ENCODE measurements at regions of chr11 and their contacts with region 1.

Region 1: DNA sequence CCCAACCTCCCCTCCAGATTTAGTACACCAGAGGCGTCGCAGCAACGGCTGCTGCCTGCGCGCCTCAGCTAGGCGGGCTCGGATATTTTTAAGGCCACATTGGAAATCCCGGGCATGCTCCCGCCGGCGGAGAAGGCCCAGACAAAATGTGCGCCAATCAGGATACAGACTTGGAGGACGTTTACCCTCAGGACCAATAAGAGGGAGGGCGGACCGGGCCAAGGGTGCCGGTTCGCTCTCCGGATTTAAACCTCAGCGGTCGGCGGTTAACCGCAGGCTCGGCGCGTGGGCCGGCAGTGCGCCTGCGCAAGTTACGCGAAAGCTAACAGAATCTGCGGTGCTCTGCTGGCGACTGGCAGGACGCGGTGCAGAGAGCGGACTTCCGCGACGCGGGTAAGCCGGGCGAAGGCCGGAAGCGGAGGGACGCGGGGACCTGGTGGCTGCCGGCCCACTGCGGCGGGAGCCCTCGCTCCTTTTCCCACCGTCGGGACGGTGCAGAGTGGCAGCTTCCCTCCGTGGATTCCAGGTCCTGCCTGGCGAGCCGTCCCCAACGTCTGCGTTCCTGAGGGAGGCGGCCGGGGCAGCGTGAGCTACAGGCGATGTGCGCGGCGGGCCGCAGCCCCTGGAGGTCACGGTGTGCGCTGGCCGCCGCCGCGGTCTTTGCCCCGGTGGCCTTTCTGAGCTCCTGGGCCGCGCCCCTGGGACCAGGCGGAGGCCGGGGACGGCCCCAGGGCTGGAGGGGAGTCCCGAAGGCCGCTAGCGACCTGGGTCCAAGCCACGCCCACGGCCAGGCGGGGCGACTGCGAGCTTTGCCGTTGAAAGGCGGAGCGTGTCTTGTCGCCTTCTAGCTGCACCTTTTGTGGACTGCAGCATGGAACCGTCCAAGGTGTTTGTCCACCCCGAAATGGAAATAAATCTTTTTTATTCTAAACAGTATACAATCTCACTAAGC is at the start of gene HYLS1:
- DNase-seq: peak; percentile 99
- H3K4me3 Mint-ChIP-seq: peak within 1 kb of the TSS; percentile 82
- H3K27ac Mint-ChIP-seq: peak within 1 kb of the TSS; percentile 97
- H3K4me1 Mint-ChIP-seq: peaks cover 35% of the 10 kb centered on the region
- H3K27me3 Mint-ChIP-seq: peaks cover 6% of the 10 kb centered on the region
- total RNA-seq, gene HYLS1: 6.5 and 6.8 TPM in 2 replicates

Region 2: DNA sequence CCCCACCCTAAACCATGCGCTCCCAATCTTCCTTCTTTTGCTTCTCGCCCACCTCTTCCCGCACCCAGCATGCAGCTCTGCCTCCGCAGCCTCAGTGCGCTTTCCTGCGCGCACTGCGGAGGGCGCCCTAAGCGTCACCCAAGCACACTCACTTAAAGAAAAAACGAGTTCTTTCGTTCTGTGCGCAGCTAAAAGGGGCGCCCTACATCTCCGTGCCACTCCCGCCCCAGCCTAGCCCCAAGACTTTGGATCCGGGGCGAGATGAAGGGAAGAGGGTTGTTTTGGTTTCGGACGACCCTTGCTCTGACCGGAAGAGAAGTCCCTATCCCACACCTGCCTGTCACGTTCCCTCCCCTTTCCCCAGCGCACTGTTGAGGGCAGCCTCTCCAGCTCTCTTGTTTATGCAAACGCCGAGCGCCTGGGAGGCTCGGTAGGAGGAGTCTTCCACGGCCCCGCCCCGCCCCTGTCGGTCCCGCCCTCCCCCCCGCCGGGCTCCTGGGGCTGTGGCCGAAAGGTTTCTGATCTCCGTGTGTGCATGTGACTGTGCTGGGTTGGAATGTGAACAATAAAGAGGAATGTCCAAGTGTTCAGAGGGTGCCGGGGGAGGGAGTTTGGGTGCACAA is 1140.9 kb before region 1 on chr11:
- intact Hi-C with region 1: loop called (anchors 5 kb)
- DNase-seq: peak; percentile 64
- H3K4me3 Mint-ChIP-seq: peak overlapping the region; percentile 89
- H3K27ac Mint-ChIP-seq: peak overlapping the region; percentile 86
- H3K4me1 Mint-ChIP-seq: peaks cover 28% of the 10 kb centered on the region
- H3K27me3 Mint-ChIP-seq: peaks cover 12% of the 10 kb centered on the region

Region 3: GRCh38 chr11:125514336-125515101 is 373.1 kb before region 1 on chr11:
- intact Hi-C with region 1: loop called (anchors 1 kb)
- DNase-seq: peak; percentile 55
- H3K4me3 Mint-ChIP-seq: peak overlapping the region; percentile 8
- H3K27ac Mint-ChIP-seq: peak overlapping the region; percentile 83
- H3K4me1 Mint-ChIP-seq: peaks cover 57% of the 10 kb centered on the region
- H3K27me3 Mint-ChIP-seq: no peaks in the 10 kb centered on the region

Region 4: GRCh38 chr11:125625630-125626287 is 261.9 kb before region 1 on chr11:
- intact Hi-C with region 1: loop called (anchors 1 kb)
- DNase-seq: peak; percentile 82
- H3K4me3 Mint-ChIP-seq: peak overlapping the region; percentile 98
- H3K27ac Mint-ChIP-seq: peak overlapping the region; percentile 99
- H3K4me1 Mint-ChIP-seq: peaks cover 38% of the 10 kb centered on the region
- H3K27me3 Mint-ChIP-seq: no peaks in the 10 kb centered on the region

Region 5: GRCh38 chr11:126062679-126063506 is 175.2 kb after region 1 on chr11 and contains the start of gene CDON:
- intact Hi-C with region 1: loop called (anchors 1 kb)
- DNase-seq: peak; percentile 90
- H3K4me3 Mint-ChIP-seq: peak within 1 kb of the TSS; percentile 84
- H3K27ac Mint-ChIP-seq: peak within 1 kb of the TSS; percentile 96
- H3K4me1 Mint-ChIP-seq: peaks cover 9% of the 10 kb centered on the region
- H3K27me3 Mint-ChIP-seq: peaks cover 38% of the 10 kb centered on the region
- total RNA-seq, gene CDON: 1.3 and 1.8 TPM in 2 replicates

Region 6: GRCh38 chr11:126282736-126283591 is 395.3 kb after region 1 on chr11 and contains the start of gene TIRAP:
- intact Hi-C with region 1: loop called (anchors 5 kb)
- DNase-seq: peak; percentile 53
- H3K4me3 Mint-ChIP-seq: peak within 1 kb of the TSS; percentile 98
- H3K27ac Mint-ChIP-seq: peak within 1 kb of the TSS; percentile 98
- H3K4me1 Mint-ChIP-seq: peaks cover 45% of the 10 kb centered on the region
- H3K27me3 Mint-ChIP-seq: no peaks in the 10 kb centered on the region
- total RNA-seq, gene TIRAP: 13.0 and 15.0 TPM in 2 replicates

Measured in activated T-helper 1 cell treated with anti-CD3 and anti-CD28 coated beads, Interleukin-12 subunit alpha, Interleukin-12 subunit beta, Interleukin-2, Interleukin-4 antibody, amounts not matched to agents 30 ng/mL and 10 ng/mL and 1 ng/mL, durations not matched to agents 14 hours and 24 hours and 36 hours (primary cell).